Psoas muscle (tissue), 8 donors: ENCODE measurements at regions of chr1 and their contacts with region 1.

Region 1: DNA sequence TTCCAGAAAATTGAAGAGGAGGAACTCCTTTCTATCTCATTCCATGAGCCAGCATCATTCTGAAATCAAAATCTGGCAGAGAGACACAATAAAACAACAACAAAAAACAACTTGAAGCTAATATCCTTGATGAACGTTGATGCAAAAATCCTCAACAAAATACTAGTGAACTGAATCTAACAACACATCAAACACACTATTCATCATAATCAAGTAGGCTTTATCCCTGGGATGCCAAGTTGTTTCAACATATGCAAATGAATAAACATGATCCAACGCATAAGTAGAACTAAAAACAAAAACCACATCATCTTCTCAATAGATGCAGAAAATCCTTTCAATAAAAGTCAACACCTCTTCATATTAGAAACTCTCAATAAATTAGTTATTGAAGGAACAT is 335.3 kb upstream of the BRINP3 start:
- DNase-seq: no peak
- ATAC-seq: no peak
- H3K4me3 ChIP-seq: no peak overlapping the region
- H3K27ac ChIP-seq: no peak overlapping the region
- H3K4me1 ChIP-seq: no peaks in the 10 kb centered on the region
- H3K27me3 ChIP-seq: no peaks in the 10 kb centered on the region
- CTCF ChIP-seq: no peak

Region 2: GRCh38 chr1:191049781-191050180 is 236.8 kb after region 1 on chr1:
- intact Hi-C with region 1: loop called in 1 of 2 experiments (anchors 5 kb)
- DNase-seq: no peak
- ATAC-seq: no peak
- H3K4me3 ChIP-seq: no peak overlapping the region
- H3K27ac ChIP-seq: no peak overlapping the region
- H3K4me1 ChIP-seq: no peaks in the 10 kb centered on the region
- H3K27me3 ChIP-seq: no peaks in the 10 kb centered on the region
- CTCF ChIP-seq: no peak